ENCODE measurements at regions of chr4 and their contacts with region 1.

Region 1: GRCh38 chr4:38675146-38676121 is 11.4 kb downstream of the KLF3 start:
- DNase-seq: peak; percentile 57 to 85 (median 81)
- ATAC-seq: peak; percentile 75
- H3K4me3 ChIP-seq: peak overlapping the region; percentile 25
- H3K4me3 Mint-ChIP-seq: peak overlapping the region; percentile 48 to 99 (median 81)
- H3K27ac ChIP-seq: peak overlapping the region; percentile 98
- H3K27ac Mint-ChIP-seq: peak overlapping the region in 8 of 9 donors; percentile 82 to 100 (median 94)
- H3K4me1 ChIP-seq: peaks cover 45 to 70% of the 10 kb centered on the region in 2 donors
- H3K4me1 Mint-ChIP-seq: peaks cover 61 to 97% (median 90%) of the 10 kb centered on the region in 7 donors
- H3K27me3 ChIP-seq: no peaks in the 10 kb centered on the region
- H3K27me3 Mint-ChIP-seq: peaks cover 0 to 3% (median 0%) of the 10 kb centered on the region in 5 donors

Region 2: GRCh38 chr4:38069271-38069760 is 606.1 kb before region 1 on chr4:
- CTCF ChIA-PET with region 1: no interaction called
- POLR2A ChIA-PET with region 1: no interaction called
- intact Hi-C with region 1: loop called in 1 of 2 experiments (anchors 1 kb)
- DNase-seq: peak in 6 of 9 donors; percentile 16 to 53 (median 38)
- ATAC-seq: peak; percentile 86
- H3K4me3 ChIP-seq: no peak overlapping the region
- H3K4me3 Mint-ChIP-seq: no peak overlapping the region
- H3K27ac ChIP-seq: no peak overlapping the region
- H3K27ac Mint-ChIP-seq: peak overlapping the region in 1 of 9 donors; percentile 12
- H3K4me1 ChIP-seq: no peaks in the 10 kb centered on the region
- H3K4me1 Mint-ChIP-seq: peaks cover 9 to 29% (median 18%) of the 10 kb centered on the region in 7 donors
- H3K27me3 ChIP-seq: no peaks in the 10 kb centered on the region
- H3K27me3 Mint-ChIP-seq: no peaks in the 10 kb centered on the region

Region 3: DNA sequence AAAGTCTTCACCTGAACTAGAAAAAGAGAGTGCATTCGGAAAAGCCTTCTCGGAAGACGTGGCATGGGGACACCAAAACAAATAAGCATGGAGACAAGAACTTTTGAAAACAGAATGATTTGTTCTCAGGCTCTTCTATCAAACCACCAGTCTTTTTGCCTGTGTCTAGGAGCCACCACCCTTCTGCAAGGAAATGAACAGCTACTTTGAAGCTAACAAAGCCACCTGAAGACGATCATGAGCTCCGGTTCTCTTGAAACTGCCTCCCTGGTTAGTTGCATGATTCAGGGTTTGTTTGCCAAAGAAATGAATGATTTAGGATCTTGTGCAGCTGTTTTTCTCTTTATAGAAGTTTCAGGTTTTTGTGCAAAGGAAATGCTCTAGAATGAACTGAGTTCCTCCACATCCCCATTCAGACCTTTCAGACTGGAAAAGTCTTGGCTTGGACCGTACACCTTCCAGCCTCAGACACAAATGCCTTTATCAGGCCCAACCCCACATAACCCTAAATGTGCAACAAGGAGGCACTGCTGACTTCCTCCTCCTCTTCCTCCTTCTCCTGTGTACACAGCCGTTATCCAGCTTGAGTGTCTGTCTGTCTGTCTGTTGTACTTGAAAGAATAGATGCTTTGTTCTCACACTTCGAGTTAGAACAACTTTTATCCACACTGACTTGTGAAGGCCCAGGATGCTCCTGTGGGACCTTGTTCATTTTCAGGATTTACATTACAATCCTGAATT is 346.3 kb before region 1 on chr4:
- CTCF ChIA-PET with region 1: interaction called, 5 read pairs
- POLR2A ChIA-PET with region 1: interaction called, 6 read pairs
- intact Hi-C with region 1: loop called in 1 of 2 experiments (anchors 2 kb)
- DNase-seq: peak in 7 of 9 donors; percentile 57 to 87 (median 77)
- ATAC-seq: peak; percentile 87
- H3K4me3 ChIP-seq: no peak overlapping the region
- H3K4me3 Mint-ChIP-seq: peak overlapping the region; percentile 14 to 83 (median 73)
- H3K27ac ChIP-seq: peak overlapping the region; percentile 68
- H3K27ac Mint-ChIP-seq: peak overlapping the region; percentile 43 to 98 (median 92)
- H3K4me1 ChIP-seq: peaks cover 0 to 69% of the 10 kb centered on the region in 2 donors
- H3K4me1 Mint-ChIP-seq: peaks cover 30 to 95% (median 74%) of the 10 kb centered on the region in 7 donors
- H3K27me3 ChIP-seq: no peaks in the 10 kb centered on the region
- H3K27me3 Mint-ChIP-seq: peaks cover 0 to 31% (median 0%) of the 10 kb centered on the region in 5 donors

Region 4: GRCh38 chr4:38523524-38524448 is 151.6 kb before region 1 on chr4:
- CTCF ChIA-PET with region 1: interaction called, 4 read pairs
- POLR2A ChIA-PET with region 1: interaction called, 10 read pairs
- intact Hi-C with region 1: no loop called
- DNase-seq: peak in 1 of 9 donors; percentile 38
- ATAC-seq: peak; percentile 84
- H3K4me3 ChIP-seq: no peak overlapping the region
- H3K4me3 Mint-ChIP-seq: peak overlapping the region in 3 of 10 donors; percentile 20 to 49 (median 38)
- H3K27ac ChIP-seq: no peak overlapping the region
- H3K27ac Mint-ChIP-seq: peak overlapping the region in 4 of 9 donors; percentile 7 to 65 (median 14)
- H3K4me1 ChIP-seq: peaks cover under 1 to 2% of the 10 kb centered on the region in 2 donors
- H3K4me1 Mint-ChIP-seq: peaks cover 22 to 51% (median 33%) of the 10 kb centered on the region in 7 donors
- H3K27me3 ChIP-seq: no peaks in the 10 kb centered on the region
- H3K27me3 Mint-ChIP-seq: peaks cover 0 to 44% (median 0%) of the 10 kb centered on the region in 5 donors

Region 5: DNA sequence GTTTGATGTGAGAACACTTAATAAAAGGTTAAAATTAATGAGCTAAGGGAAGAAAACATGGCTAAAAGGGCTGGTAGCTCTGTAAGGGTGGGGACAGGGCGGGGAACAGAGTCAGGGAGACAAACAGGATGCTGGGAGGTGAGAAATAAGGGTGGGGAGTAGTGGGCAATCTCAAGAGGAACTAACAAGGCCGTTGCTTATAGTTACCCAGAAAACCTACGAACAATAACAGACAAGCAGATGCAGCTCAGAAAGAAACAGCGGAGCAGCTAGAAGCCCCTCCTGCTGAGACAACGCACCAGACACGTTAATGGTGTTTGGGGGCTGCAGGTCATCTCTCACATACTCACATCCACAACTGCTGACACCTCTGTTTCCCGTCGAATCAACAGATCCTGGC is 21.2 kb before region 1 on chr4:
- CTCF ChIA-PET with region 1: interaction called, 3 read pairs
- POLR2A ChIA-PET with region 1: interaction called, 21 read pairs
- intact Hi-C with region 1: loop called in 1 of 2 experiments (anchors 1 kb)
- DNase-seq: peak in 7 of 9 donors; percentile 67 to 88 (median 79)
- ATAC-seq: peak; percentile 86
- H3K4me3 ChIP-seq: peak overlapping the region; percentile 45
- H3K4me3 Mint-ChIP-seq: peak overlapping the region; percentile 64 to 94 (median 82)
- H3K27ac ChIP-seq: peak overlapping the region; percentile 92
- H3K27ac Mint-ChIP-seq: peak overlapping the region; percentile 80 to 100 (median 99)
- H3K4me1 ChIP-seq: peaks cover 24 to 43% of the 10 kb centered on the region in 2 donors
- H3K4me1 Mint-ChIP-seq: peaks cover 37 to 70% (median 65%) of the 10 kb centered on the region in 7 donors
- H3K27me3 ChIP-seq: no peaks in the 10 kb centered on the region
- H3K27me3 Mint-ChIP-seq: peaks cover 0 to 46% (median 0%) of the 10 kb centered on the region in 5 donors

Region 6: DNA sequence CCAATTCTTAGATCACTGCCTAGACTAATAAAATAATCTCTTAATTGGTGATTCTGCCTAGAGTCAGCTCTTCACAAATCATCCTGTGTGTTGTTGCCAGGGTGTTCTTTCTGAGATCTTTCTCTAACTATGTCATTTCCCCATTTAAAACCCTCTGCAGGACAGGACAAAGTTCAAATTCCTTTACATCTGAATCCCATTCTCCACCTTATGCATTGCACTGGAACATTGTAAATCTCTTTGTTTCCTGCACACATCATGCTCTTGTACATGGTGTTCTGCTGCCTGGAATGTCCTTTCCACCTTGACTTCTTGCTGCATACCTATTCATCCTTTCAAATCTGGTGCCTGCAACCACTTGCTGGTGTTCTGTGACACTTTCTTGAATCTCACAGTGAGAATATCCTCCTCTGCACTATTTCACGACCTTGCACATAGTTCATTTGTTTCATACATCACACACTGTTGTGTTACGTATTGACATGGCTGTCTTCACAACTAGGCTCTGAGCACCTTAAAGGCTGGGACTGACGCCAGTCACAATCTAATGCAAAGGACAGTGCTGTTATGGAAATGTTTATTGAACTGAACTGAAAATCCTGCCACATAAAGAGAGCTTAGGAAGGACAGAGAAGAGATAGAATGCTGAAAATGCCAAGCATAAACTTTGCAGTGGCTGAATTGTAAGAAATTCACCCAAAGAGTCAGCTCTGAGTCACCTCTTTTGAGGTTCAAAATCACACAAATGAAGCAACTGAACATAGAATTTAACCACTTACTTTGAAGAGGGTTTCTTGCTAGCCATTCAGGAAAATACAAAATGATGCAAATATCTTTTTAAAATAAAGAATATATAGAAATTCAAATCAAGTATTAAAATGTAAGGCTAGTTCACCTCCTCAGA is 989.6 kb after region 1 on chr4:
- CTCF ChIA-PET with region 1: no interaction called
- POLR2A ChIA-PET with region 1: no interaction called
- intact Hi-C with region 1: no loop called
- DNase-seq: no peak
- ATAC-seq: no peak
- H3K4me3 ChIP-seq: no peak overlapping the region
- H3K4me3 Mint-ChIP-seq: no peak overlapping the region
- H3K27ac ChIP-seq: no peak overlapping the region
- H3K27ac Mint-ChIP-seq: no peak overlapping the region
- H3K4me1 ChIP-seq: no peaks in the 10 kb centered on the region
- H3K4me1 Mint-ChIP-seq: no peaks in the 10 kb centered on the region
- H3K27me3 ChIP-seq: no peaks in the 10 kb centered on the region
- H3K27me3 Mint-ChIP-seq: peaks cover 0 to 3% (median 0%) of the 10 kb centered on the region in 5 donors

Measured in naive thymus-derived CD4-positive, alpha-beta T cell (primary cell).